HCT116 (cell line): ENCODE measurements at regions of chr7 and their contacts with region 1.

Region 1: DNA sequence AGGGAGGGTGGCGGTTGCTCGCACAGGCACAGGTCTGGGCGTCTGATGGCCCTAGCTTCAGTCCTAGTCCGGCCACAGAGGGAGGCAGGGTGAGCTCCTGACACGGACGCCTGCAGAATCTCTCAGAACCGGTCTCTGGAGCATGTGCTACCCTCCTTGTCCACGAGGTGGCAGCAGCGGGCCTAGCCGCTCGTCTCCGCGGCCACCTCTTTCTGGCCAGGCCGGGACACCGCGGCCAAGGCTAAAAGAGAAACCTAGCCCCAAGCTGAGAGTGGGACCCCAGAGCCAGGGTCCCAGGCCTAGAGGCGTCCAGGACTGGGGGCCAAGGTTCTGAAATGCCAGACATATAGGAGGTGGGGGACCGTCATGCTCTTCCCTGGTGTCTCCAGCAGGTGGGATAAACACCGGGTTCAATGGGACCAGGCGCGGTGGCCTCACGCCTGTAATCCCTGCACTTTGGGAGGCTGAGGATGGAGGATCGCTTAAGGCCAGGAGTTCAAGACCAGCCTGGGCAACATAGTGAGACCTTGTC is 3.2 kb upstream of the LAT2 start:
- DNase-seq: peak; percentile 42
- ATAC-seq: peak; percentile 70
- H3K4me3 ChIP-seq: peak overlapping the region; percentile 28 to 38
- H3K27ac ChIP-seq: no peak overlapping the region
- H3K4me1 ChIP-seq: peaks cover 30 to 49% of the 10 kb centered on the region in 2 experiments
- H3K27me3 ChIP-seq: no peaks in the 10 kb centered on the region
- CTCF ChIP-seq: peak; percentile 96 to 98 (median 97)
- POLR2A ChIP-seq: no peak
- RAD21 ChIP-seq: peak; percentile 99

Region 2: DNA sequence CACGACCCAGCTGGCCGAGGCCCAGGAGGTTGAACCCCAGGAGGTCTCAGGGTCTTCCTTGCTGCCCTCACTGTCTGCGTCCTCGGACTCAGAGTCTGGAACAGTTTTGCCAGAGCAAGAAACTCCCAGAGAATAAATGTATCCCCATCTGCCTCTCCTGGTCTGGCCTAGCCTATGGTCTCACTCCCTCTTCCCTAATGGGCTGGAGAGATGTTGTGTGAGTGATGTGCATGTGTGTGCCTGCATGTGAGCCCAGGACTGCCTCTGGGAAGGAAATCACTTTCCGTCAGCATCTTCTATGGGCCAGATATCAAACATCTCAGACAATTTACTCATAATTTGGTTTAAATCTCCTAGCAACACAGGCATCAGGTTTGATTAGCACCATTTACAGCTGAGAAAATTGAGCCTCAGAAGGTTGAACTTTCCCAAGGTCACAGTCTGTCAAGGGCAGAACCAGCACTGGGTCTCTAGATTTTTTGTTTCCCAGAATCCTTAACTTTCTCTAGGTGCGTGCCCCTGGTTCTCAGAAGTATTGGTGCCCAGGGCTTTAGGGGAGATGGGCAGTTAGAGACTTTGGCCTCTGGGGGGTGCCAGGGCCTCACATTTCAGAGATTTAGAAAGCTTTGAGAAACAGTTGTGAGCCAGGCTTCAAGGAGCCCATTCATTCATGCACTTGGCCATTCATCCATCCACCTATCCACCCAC is 340.8 kb before region 1 on chr7:
- CTCF ChIA-PET with region 1: no interaction called
- POLR2A ChIA-PET with region 1: no interaction called
- RAD21 ChIA-PET with region 1: no interaction called
- intact Hi-C with region 1: loop called (anchors 1 kb)
- DNase-seq: no peak
- ATAC-seq: peak; percentile 88
- H3K4me3 ChIP-seq: no peak overlapping the region
- H3K27ac ChIP-seq: no peak overlapping the region
- H3K4me1 ChIP-seq: no peaks in the 10 kb centered on the region
- H3K27me3 ChIP-seq: no peaks in the 10 kb centered on the region
- CTCF ChIP-seq: peak; percentile 70 to 75 (median 73); a peak in 5 of 6 replicates
- POLR2A ChIP-seq: no peak
- RAD21 ChIP-seq: peak; percentile 91

Region 3: GRCh38 chr7:74051629-74052410 is 154.8 kb before region 1 on chr7:
- CTCF ChIA-PET with region 1: interaction called, 6 read pairs
- POLR2A ChIA-PET with region 1: no interaction called
- RAD21 ChIA-PET with region 1: no interaction called
- intact Hi-C with region 1: loop called (anchors 5 kb)
- DNase-seq: peak; percentile 34
- ATAC-seq: peak; percentile 93
- H3K4me3 ChIP-seq: no peak overlapping the region
- H3K27ac ChIP-seq: no peak overlapping the region
- H3K4me1 ChIP-seq: peaks cover 2 to 7% of the 10 kb centered on the region in 2 experiments; a peak in 2 of 4 replicates
- H3K27me3 ChIP-seq: peaks cover 4% of the 10 kb centered on the region; the same call in 1 of the 2 replicates
- CTCF ChIP-seq: peak; percentile 60 to 77 (median 64)
- POLR2A ChIP-seq: no peak
- RAD21 ChIP-seq: peak; percentile 91

Region 4: GRCh38 chr7:74061840-74062539 is 144.7 kb before region 1 on chr7:
- CTCF ChIA-PET with region 1: no interaction called
- POLR2A ChIA-PET with region 1: no interaction called
- RAD21 ChIA-PET with region 1: interaction called in 1 of 2 experiments, 3 read pairs
- intact Hi-C with region 1: loop called (anchors 1 kb)
- DNase-seq: peak; percentile 55
- ATAC-seq: peak; percentile 76
- H3K4me3 ChIP-seq: no peak overlapping the region
- H3K27ac ChIP-seq: peak overlapping the region; percentile 27; the same call in 1 of the 2 replicates
- H3K4me1 ChIP-seq: peaks cover 21 to 43% of the 10 kb centered on the region in 2 experiments
- H3K27me3 ChIP-seq: peaks cover 3% of the 10 kb centered on the region
- CTCF ChIP-seq: no peak
- POLR2A ChIP-seq: no peak
- RAD21 ChIP-seq: no peak